IMR-90 (cell line): ENCODE measurements at regions of chr3 and their contacts with region 1.

Region 1: GRCh38 chr3:171213178-171213577 is 186.7 kb upstream of the SLC2A2 start:
- DNase-seq: no peak
- ATAC-seq: no peak
- H3K4me3 ChIP-seq: no peak overlapping the region
- H3K27ac ChIP-seq: no peak overlapping the region
- H3K4me1 ChIP-seq: no peaks in the 10 kb centered on the region
- H3K27me3 ChIP-seq: no peaks in the 10 kb centered on the region; the same call in 1 of the 2 replicates
- CTCF ChIP-seq: no peak
- POLR2A ChIP-seq: no peak
- RAD21 ChIP-seq: no peak

Region 2: DNA sequence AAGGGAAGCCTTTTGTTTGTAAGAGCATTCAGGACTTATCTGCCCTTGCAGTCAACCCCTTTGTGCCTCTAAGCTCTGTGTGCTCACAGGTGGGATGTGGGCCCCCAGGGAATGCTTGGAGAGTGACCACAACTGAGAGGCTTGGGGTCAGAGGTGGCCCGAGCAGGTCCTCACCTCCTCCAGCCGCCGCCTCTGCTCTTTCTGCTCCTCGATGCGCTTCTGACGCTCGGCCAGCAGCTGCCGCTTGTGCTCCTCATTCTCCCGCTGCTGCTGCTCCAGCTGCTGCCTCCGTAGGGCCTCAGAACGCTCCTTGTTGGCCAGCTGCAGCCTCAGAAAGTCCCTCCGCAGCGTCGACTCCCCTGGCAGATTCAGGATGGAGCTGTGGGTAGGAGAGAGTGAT is 55.9 kb before region 1 on chr3:
- CTCF ChIA-PET with region 1: no interaction called
- POLR2A ChIA-PET with region 1: no interaction called
- dilution Hi-C with region 1: no loop called
- in situ Hi-C with region 1: no loop called
- intact Hi-C with region 1: no loop called
- DNase-seq: no peak
- ATAC-seq: no peak
- H3K4me3 ChIP-seq: no peak overlapping the region
- H3K27ac ChIP-seq: no peak overlapping the region
- H3K4me1 ChIP-seq: no peaks in the 10 kb centered on the region
- H3K27me3 ChIP-seq: no peaks in the 10 kb centered on the region
- CTCF ChIP-seq: no peak
- POLR2A ChIP-seq: no peak
- RAD21 ChIP-seq: no peak

Region 3: GRCh38 chr3:171257251-171258203 is 44.3 kb after region 1 on chr3:
- CTCF ChIA-PET with region 1: no interaction called
- POLR2A ChIA-PET with region 1: no interaction called
- dilution Hi-C with region 1: no loop called
- in situ Hi-C with region 1: no loop called
- intact Hi-C with region 1: loop called (anchors 5 kb)
- DNase-seq: peak; percentile 65
- ATAC-seq: peak; percentile 85
- H3K4me3 ChIP-seq: no peak overlapping the region
- H3K27ac ChIP-seq: no peak overlapping the region
- H3K4me1 ChIP-seq: peaks cover 6% of the 10 kb centered on the region
- H3K27me3 ChIP-seq: no peaks in the 10 kb centered on the region; the same call in 1 of the 2 replicates
- CTCF ChIP-seq: no peak
- POLR2A ChIP-seq: no peak
- RAD21 ChIP-seq: no peak